Mammary epithelial cell (primary cell): ENCODE measurements at regions of chr19 and their contacts with region 1.

Region 1: DNA sequence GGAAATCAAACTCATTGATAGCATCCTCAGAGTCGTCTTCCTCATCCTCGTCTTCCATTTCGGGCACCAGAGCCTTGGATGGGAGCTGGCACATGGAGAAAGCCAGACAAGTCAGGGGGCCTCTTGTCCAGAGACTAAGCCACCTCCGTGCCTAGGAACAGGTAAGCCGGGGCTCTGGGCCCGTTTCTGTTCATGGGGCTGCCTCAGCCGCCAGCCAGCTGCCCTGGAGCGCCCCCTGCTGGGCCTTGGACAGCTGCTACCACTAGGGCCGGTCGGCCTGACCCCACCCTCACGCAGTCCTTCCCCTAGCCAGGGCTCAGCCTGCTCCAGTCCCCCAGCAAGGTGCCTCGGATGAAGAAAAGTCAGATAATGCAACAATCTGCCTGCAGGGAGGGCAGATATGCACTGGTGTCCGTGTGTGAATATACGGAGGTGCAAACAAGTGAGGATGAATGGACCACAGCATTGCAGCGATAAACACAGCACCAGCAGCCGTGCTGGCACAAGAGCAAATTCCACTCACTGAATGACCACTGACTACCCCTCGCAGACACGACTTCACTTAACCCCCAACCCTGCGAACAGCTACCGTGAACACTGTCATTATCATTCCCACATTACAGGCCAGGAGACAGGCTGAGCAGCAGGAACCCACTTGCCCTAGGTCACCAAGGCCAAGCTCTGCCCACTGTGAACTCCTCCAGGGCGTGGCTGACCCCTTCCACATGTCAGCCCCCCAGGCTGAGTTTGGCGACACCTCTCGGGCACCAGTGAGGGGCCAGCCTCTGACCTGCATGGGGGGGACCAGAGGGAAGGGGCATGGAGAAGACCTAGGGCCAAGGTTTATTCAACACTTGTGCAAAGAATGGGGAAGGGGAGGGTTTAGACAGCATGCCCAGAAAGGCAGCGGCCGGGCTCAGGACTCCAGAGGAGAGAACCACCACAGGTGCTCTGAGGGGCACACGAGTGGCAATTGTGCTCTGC is 12.1 kb upstream of the PRKD2 start:
- DNase-seq: no peak
- H3K4me3 ChIP-seq: no peak overlapping the region
- H3K27ac ChIP-seq: no peak overlapping the region
- H3K4me1 ChIP-seq: peaks cover 26% of the 10 kb centered on the region
- H3K27me3 ChIP-seq: no peaks in the 10 kb centered on the region
- CTCF ChIP-seq: peak; percentile 72 to 93

Region 2: DNA sequence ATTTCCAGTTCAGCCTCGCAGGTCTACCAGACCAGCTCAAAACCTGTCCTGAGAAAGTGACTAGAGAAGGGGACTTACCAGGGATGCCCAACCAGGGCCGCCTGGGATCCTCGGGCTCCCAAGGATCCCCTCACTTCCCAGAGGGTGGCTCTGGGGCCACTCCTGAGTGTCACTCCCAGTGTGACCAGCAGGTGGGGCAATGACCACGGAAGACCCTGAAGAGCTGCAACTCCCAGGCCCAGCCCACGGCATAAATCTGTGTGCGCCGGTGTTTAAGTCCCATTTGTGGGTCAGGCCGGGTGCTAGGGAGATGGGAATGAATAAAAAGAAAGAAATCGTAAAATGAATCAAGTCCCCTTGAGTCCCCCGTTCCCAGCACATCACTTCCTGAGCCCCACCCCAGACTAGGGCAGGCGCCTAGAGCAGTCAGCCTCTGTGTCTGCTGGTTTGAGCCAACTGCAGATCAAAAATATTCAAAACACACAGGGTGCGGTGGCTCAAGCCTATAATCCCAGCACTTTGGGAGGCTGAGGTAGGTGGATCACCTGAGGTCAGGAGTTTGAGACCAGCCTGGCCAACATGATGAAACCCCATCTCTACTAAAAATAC is 114.8 kb before region 1 on chr19:
- CTCF ChIA-PET with region 1: no interaction called
- dilution Hi-C with region 1: no loop called
- in situ Hi-C with region 1: no loop called
- intact Hi-C with region 1: loop called (anchors 2 kb)
- DNase-seq: peak; percentile 47
- H3K4me3 ChIP-seq: no peak overlapping the region
- H3K27ac ChIP-seq: no peak overlapping the region
- H3K4me1 ChIP-seq: no peaks in the 10 kb centered on the region
- H3K27me3 ChIP-seq: no peaks in the 10 kb centered on the region
- CTCF ChIP-seq: peak; percentile 63 to 86

Region 3: DNA sequence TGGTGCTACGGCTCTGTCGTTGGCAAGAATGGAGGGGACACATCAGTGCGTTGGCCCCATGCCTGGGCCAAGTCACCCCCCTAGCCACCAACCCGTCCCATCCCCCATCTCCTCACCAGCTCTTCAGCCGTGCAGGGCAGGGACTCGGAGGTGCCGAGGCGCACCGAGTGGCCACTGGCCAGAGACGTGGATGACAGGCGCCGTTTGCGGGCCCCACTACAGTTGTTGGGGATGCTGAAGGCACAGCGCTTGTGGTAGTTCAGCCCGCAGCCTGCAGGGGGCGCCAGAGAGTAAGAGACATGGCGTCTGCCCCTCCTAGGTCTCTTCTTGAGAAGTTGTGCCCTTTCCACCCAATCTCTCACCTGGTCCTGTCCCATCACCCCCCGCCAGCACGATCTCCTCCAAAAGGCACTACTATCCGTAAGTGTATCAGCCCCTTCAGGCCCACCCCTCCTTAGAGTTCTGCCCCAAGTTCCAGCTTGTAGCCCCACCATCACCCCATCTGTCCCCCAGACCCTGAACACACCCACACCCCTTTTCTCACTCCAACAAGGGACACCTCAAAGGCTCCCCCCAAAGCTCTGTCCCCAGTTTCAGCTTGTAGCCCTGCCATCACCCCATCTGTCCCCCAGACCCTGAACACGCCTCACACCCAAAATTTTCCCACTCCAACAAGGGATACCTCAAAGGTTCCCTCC is 24.5 kb before region 1 on chr19:
- CTCF ChIA-PET with region 1: no interaction called
- dilution Hi-C with region 1: no loop called
- in situ Hi-C with region 1: no loop called
- intact Hi-C with region 1: loop called (anchors 1 kb)
- DNase-seq: peak; percentile 35
- H3K4me3 ChIP-seq: no peak overlapping the region
- H3K27ac ChIP-seq: no peak overlapping the region
- H3K4me1 ChIP-seq: no peaks in the 10 kb centered on the region
- H3K27me3 ChIP-seq: no peaks in the 10 kb centered on the region
- CTCF ChIP-seq: peak; percentile 78 to 84

Region 4: DNA sequence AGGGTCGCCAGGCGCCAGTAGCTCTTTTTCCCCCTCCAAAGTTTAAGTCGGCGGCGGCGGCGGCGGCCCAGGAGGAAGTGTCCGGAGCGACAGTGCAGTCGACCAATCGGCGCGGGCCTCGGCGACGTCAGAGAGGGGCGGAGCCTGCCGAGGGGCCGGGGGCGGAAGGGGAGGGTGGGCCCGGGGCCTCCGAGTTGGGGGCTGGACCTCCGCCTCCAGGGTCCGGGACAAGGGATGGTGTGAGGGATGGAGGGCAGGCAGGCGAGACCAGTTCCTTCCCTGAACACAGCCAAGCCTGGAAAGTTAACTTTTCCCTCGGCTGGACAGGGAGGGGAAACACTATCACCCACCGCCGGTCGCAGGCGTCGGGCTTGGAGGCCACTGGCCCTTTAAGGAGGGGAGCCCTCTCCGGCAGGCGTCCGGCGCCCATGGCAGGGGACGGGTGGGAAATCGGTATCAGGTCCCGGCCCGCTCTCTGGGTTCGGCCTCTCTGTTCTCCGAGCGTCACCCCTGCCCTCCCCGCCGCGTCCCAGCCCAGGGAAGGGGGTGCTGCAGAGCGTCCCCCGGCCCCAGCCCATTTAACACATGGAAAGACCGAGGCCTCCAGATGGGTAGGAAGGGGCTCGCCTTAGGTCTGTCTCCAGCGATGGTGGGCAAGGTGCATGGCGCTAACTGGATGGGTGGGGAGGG is 11.8 kb before region 1 on chr19 and contains the start of gene PRKD2:
- CTCF ChIA-PET with region 1: no interaction called
- dilution Hi-C with region 1: no loop called
- in situ Hi-C with region 1: no loop called
- intact Hi-C with region 1: loop called (anchors 2 kb)
- DNase-seq: peak; percentile 72
- H3K4me3 ChIP-seq: peak within 1 kb of the TSS; percentile 59 to 91 (median 63)
- H3K27ac ChIP-seq: peak within 1 kb of the TSS; percentile 82
- H3K4me1 ChIP-seq: peaks cover 32% of the 10 kb centered on the region
- H3K27me3 ChIP-seq: no peaks in the 10 kb centered on the region
- CTCF ChIP-seq: no peak
- total RNA-seq, gene PRKD2: 20.2 to 55.5 TPM